A549 (cell line): ENCODE measurements at regions of chr7 and their contacts with region 1.

Region 1: DNA sequence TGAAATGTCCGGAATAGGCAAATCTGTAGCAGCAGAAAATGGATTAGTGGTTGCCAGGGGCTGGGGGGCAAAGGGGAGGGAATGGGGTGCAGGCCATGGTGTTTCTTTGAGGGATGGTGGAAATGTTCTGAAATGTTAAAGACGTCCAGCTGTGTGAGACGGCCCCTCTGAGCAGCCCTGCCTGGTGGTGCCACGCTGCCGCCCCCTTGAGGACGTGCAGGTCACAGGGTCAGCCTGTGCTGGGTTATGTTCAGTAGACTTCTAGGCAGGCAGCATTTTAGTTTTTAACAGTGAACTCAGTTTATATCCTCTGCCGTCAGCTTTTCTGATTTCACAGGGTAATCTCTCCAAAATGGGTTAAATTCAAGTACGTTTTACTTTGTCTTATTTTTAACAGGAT is 9.4 kb downstream of the NUB1 start:
- DNase-seq: peak; percentile 32 to 35
- ATAC-seq: peak; percentile 80 to 89; a peak in 4 of 6 replicates
- H3K4me3 ChIP-seq: no peak overlapping the region
- H3K27ac ChIP-seq: no peak overlapping the region
- H3K4me1 ChIP-seq: peaks cover 26% of the 10 kb centered on the region
- CTCF ChIP-seq: peak; percentile 35
- EP300 ChIP-seq: no peak
- POLR2A ChIP-seq: no peak
- RAD21 ChIP-seq: peak in 1 of 2 experiments; percentile 30; a peak in 2 of 5 replicates

Region 2: DNA sequence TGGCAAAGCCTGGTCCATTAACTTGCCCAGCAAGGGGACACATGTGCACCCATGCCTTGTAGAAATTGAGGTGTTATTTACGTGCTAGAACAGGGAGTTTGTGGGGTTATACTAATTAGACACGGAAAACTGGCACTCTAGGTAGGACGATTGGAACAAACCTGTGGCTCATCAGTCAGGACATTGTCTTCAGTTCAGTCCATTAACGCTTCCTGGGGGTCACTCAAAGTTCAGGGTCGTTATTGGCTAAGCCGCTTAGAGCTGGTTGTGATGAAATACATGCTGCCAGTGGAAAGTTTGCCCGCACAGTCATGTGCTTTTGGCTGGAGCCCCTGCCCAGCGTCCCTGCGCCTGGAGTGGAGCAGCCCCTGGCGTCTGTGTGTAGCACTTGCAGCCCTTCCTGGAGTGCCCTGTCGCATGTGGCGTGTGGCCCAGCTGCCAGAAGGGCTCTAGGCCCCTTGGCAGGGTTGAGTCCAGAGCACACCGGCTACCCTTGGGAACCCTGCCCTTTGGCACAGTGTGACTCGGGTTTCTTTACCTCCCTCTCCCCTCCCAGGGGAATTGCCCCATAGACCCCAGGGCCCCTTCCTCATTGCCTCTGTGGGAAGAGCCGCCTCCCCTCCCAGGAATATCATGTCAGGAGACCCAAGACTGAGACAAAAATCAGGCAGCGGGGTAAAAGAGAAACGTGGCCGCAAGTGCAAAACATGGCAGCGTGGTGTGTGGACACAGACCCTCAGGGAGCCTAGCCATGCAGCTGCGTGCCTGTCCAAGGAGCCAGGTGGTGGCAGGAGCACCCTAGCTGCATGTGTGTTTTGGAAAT is 962.1 kb before region 1 on chr7:
- CTCF ChIA-PET with region 1: no interaction called
- POLR2A ChIA-PET with region 1: no interaction called
- DNase-seq: no peak
- ATAC-seq: peak in 1 of 2 experiments; percentile 87; a peak in 4 of 6 replicates
- H3K4me3 ChIP-seq: no peak overlapping the region
- H3K27ac ChIP-seq: no peak overlapping the region
- H3K4me1 ChIP-seq: no peaks in the 10 kb centered on the region
- CTCF ChIP-seq: no peak
- EP300 ChIP-seq: no peak
- POLR2A ChIP-seq: no peak
- RAD21 ChIP-seq: 0 out of 5 replicates have a peak, but pooled peaks of 1 of the 2 experiments have one; percentile 12

Region 3: GRCh38 chr7:151327659-151328058 is 23.4 kb before region 1 on chr7:
- CTCF ChIA-PET with region 1: interaction called, 234 read pairs
- POLR2A ChIA-PET with region 1: no interaction called
- DNase-seq: no peak
- ATAC-seq: no peak
- H3K4me3 ChIP-seq: no peak overlapping the region
- H3K27ac ChIP-seq: no peak overlapping the region
- H3K4me1 ChIP-seq: no peaks in the 10 kb centered on the region
- CTCF ChIP-seq: no peak
- EP300 ChIP-seq: no peak
- POLR2A ChIP-seq: no peak
- RAD21 ChIP-seq: no peak

Region 4: GRCh38 chr7:151361193-151361959 is 10.3 kb after region 1 on chr7:
- CTCF ChIA-PET with region 1: interaction called, 26 read pairs
- POLR2A ChIA-PET with region 1: no interaction called
- DNase-seq: no peak
- ATAC-seq: no peak
- H3K4me3 ChIP-seq: no peak overlapping the region
- H3K27ac ChIP-seq: no peak overlapping the region
- H3K4me1 ChIP-seq: no peaks in the 10 kb centered on the region
- CTCF ChIP-seq: no peak
- EP300 ChIP-seq: no peak
- POLR2A ChIP-seq: no peak
- RAD21 ChIP-seq: no peak

Region 5: GRCh38 chr7:151393031-151393977 is 42.3 kb after region 1 on chr7:
- CTCF ChIA-PET with region 1: no interaction called
- POLR2A ChIA-PET with region 1: no interaction called
- DNase-seq: no peak
- ATAC-seq: no peak
- H3K4me3 ChIP-seq: no peak overlapping the region
- H3K27ac ChIP-seq: peak overlapping the region in 1 of 2 experiments; percentile 60; a peak in 1 of 6 replicates
- H3K4me1 ChIP-seq: 0 out of 3 replicates have a peak, but pooled peaks cover 4% of the 10 kb centered on the region
- CTCF ChIP-seq: no peak
- EP300 ChIP-seq: no peak
- POLR2A ChIP-seq: no peak
- RAD21 ChIP-seq: no peak